Right cardiac atrium (tissue), 5 donors: ENCODE measurements at regions of chr12 and their contacts with region 1.

Region 1: DNA sequence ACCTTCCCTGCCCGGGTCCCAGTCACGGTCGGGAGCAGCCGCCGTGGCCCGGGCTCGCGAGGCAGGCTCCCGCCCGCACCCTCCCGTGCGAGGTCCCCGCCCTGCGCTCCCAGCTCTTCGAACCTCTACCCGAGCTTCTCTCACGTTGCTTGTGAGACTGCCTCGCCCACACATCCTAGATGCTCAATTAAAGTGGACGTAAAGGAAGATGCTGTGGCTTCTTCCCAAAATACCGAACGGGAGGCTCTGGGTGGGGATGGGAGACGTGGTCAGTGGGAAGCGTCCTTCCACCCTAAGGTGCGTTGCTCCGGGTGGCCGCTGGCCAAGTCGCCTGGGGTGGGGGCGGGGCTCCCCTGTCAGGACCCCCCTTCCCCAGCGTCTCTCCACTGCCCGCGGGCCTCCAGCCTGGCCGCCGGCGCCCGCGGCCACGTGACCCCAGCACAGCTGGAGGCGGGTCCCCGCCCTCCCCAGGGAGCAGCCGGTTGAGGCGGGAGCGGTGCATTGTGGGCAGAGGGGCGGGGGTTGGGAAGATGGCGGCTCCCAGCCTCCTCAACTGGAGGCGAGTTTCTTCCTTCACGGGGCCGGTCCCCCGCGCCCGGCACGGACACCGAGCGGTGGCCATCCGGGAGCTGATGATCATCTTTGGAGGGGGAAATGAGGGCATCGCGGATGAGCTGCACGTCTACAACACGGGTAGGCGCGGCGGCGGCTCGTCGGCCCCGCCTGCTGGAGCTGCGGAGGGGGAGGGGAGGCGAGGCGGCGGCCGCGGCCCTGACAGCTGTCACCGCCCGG is at the start of gene HCFC2:
- DNase-seq: peak; percentile 94 to 97 (median 97)
- ATAC-seq: peak; percentile 99
- H3K4me3 ChIP-seq: peak within 1 kb of the TSS; percentile 86
- H3K27ac ChIP-seq: peak within 1 kb of the TSS; percentile 82
- H3K4me1 ChIP-seq: no peaks in the 10 kb centered on the region
- H3K27me3 ChIP-seq: no peaks in the 10 kb centered on the region
- total RNA-seq, gene HCFC2: 10.2 to 11.0 (median 10.6) TPM

Region 2: GRCh38 chr12:103956516-103957027 is 107.7 kb before region 1 on chr12:
- intact Hi-C with region 1: loop called in 3 of 4 experiments (anchors 5 to 10 kb)
- DNase-seq: peak in 1 of 3 donors; percentile 82
- ATAC-seq: peak; percentile 65 to 66
- H3K4me3 ChIP-seq: peak overlapping the region; percentile 68
- H3K27ac ChIP-seq: peak overlapping the region; percentile 83
- H3K4me1 ChIP-seq: peaks cover 5% of the 10 kb centered on the region
- H3K27me3 ChIP-seq: no peaks in the 10 kb centered on the region

Region 3: GRCh38 chr12:103965590-103966504 is 98.4 kb before region 1 on chr12 and contains the start of gene TDG:
- intact Hi-C with region 1: loop called in 2 of 4 experiments (anchors 10 kb)
- DNase-seq: peak; percentile 99
- ATAC-seq: peak; percentile 99
- H3K4me3 ChIP-seq: peak within 1 kb of the TSS; percentile 81
- H3K27ac ChIP-seq: peak within 1 kb of the TSS; percentile 92
- H3K4me1 ChIP-seq: peaks cover 5% of the 10 kb centered on the region
- H3K27me3 ChIP-seq: no peaks in the 10 kb centered on the region
- total RNA-seq, gene TDG: 10.6 to 17.7 (median 12.4) TPM